Posterior vena cava (tissue), 2 donors: ENCODE measurements at regions of chr1 and their contacts with region 1.

Region 1: GRCh38 chr1:49576327-49576901 is 447.3 kb downstream of the AGBL4 start:
- DNase-seq: no peak

Region 2: DNA sequence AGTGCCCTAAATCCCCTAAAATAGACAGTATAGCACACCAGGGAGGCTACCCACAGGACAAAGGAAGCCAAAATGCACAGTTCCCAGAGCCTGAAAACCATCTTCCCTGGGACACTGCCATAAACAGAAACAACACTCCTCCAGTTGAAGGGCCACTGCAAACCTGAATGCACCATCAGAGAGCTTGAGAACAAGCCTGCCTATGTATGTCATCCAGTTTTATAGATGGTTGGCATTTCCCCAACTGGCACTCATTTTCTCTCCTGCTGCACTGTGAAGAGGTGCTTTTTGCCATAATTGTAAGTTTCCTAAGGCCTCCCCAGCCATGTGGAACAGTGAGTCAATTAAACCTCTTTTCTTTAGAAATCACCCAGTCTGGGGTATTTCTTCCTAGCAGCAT is 278.3 kb after region 1 on chr1:
- intact Hi-C with region 1: no loop called
- DNase-seq: no peak

Region 3: DNA sequence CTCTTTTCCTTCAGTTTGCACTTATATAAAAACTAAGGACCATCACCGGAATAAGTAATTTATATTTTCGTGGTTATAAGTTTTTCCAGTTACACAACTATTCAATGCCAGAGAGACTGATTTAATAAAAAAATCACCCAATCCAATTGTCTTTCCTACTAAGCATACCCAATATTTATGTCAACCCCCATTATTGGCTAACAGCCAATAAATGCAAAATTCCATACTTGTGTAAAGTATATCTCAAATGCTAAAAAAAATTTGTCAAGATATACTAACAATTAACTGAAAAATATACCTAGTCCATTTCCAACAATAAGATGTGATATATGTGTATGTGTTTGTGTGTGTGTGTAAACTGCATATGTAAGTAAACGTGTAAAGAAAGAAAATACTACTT is 330.0 kb after region 1 on chr1:
- intact Hi-C with region 1: no loop called
- DNase-seq: no peak

Region 4: GRCh38 chr1:50155541-50155940 is 579.1 kb after region 1 on chr1:
- intact Hi-C with region 1: loop called in 1 of 2 experiments (anchors 5 kb)
- DNase-seq: no peak